MCF 10A (cell line): ENCODE measurements at regions of chr5 and their contacts with region 1.

Region 1: DNA sequence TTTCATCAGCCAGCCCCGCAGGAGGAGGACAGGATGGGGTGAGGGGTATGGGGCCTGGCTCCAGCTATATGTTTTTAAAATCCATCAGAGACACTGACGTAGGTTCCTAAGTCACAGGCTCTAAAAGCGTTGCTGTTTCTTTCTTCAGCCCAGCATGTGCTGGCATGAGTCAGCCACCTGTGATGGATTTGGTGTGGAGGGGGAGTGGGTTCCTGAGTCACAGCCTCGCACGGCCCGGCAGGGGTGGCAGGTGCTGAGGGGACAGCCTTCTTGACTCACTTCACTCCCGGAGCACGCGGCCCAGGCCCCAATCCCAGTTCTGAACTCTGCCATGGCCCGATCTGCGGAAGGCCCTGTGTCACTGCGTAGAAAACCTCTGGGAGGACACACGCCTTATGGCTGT is 38.8 kb upstream of the RPL26L1 start:
- DNase-seq: peak; percentile 95
- H3K4me3 Mint-ChIP-seq: no peak overlapping the region
- H3K27ac Mint-ChIP-seq: peak overlapping the region; percentile 89
- H3K4me1 Mint-ChIP-seq: peaks cover 26% of the 10 kb centered on the region
- H3K27me3 Mint-ChIP-seq: no peaks in the 10 kb centered on the region
- CTCF ChIP-seq: no peak

Region 2: DNA sequence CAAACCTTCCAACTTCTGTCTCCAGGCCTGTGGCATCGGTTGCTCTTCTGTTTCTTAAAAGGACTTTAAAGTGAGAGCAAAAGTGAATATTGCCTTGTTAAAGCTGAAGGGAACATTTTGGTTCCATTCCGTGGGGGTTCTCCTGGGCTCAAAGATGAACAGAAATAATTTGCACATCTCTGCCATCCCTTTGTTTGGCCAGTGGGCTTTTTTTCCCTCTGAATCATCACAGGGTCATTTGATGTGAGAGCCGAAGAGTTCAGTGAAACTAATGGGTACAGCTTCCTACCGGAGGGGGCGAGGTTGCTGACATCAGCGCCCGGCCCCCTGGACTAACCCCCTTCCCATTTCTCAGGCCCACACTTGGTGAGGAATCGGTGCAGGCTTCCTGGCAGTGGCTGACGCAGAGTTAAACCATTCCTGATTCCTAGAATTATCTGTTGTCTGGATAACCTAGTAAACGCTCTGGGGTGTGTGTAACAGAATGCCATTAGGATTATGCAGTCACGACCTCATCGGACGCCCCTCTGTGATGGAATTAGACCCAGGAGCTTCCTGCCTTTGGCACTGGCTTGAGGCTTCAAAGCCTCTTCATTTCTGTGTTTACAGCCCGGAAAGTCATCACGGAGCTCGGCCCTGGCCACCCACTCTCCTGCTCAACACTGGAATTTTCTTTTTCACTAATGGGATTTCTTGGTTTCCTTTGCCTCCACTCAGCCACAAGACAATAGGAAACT is 22.8 kb before region 1 on chr5:
- CTCF ChIA-PET with region 1: no interaction called
- POLR2A ChIA-PET with region 1: interaction called, 10 read pairs
- intact Hi-C with region 1: no loop called
- DNase-seq: peak; percentile 63
- H3K4me3 Mint-ChIP-seq: no peak overlapping the region
- H3K27ac Mint-ChIP-seq: peak overlapping the region; percentile 98
- H3K4me1 Mint-ChIP-seq: peaks cover 70% of the 10 kb centered on the region
- H3K27me3 Mint-ChIP-seq: no peaks in the 10 kb centered on the region
- CTCF ChIP-seq: no peak